ENCODE measurements at regions of chr7 and their contacts with region 1.

Region 1: DNA sequence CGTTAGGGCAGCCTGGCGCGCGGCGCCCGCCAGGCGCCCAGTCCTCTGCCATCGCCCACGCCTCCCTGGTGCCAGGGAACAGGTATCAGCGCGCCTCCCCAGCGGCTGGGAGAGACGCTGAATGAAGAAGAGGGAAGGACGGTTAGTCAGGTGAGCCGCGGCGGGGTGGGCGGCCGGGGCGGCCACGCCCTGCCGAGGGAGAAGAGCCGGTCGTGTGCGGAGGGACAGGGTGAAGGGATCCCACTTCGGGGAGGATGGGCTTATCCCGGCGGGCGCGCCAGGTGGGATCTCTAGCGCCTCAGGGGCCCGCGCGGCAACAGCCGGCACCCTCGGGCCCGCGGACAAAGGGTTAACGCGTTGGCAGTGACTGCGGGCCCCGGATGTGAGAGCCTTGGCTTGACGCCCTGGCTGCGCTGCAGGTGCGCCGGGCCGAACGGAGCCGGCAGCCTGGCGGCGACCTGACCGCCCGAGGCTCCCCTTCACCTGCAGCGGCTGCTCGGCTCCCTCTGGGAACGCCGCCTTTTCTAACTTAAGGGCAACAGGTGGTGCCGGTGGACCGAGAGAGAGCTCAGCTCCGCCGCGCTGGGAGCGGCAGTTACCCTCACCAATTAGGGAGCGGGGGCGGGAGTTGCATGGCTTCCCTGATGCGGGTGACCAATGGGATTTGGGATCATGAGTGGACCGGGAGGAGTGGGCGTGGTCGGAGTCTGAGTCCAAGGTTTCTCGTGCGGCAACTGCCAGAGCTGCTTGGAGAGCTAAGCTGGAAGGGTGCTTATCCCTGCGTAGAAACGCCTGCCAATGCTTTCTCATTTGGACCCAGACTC is at the start of gene ARL4A:
- DNase-seq: peak; percentile 98
- H3K4me3 ChIP-seq: peak within 1 kb of the TSS; percentile 82 to 95 (median 89)
- H3K27ac ChIP-seq: peak within 1 kb of the TSS; percentile 84
- H3K4me1 ChIP-seq: peaks cover 6% of the 10 kb centered on the region
- H3K27me3 ChIP-seq: no peaks in the 10 kb centered on the region
- CTCF ChIP-seq: peak; percentile 19 to 63
- total RNA-seq, gene ARL4A: 24.9 to 57.3 TPM

Region 2: GRCh38 chr7:12638851-12639467 is 48.1 kb before region 1 on chr7:
- CTCF ChIA-PET with region 1: no interaction called
- dilution Hi-C with region 1: no loop called
- in situ Hi-C with region 1: no loop called
- intact Hi-C with region 1: loop called (anchors 1 kb)
- DNase-seq: peak; percentile 32
- H3K4me3 ChIP-seq: no peak overlapping the region
- H3K27ac ChIP-seq: no peak overlapping the region
- H3K4me1 ChIP-seq: no peaks in the 10 kb centered on the region
- H3K27me3 ChIP-seq: no peaks in the 10 kb centered on the region
- CTCF ChIP-seq: peak; percentile 56 to 61

Region 3: DNA sequence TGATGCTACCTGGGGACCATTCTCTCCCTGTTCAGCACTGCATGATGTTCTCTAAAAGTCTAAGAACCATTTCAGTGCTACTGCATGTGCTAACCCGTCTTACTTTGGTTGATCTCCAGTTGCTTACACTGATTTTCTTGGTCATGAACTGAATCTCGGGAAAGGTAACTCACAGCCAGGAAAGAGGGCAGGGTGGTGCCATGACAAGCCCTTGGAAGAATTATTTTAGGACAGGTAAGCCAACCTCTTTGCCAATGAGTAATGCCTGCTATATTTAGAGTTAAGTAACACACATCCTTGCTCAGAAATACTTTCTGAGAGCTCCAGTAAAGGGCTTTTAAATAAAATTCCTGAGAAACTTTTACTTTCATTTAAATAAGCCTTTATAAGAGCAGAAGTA is 127.0 kb after region 1 on chr7:
- CTCF ChIA-PET with region 1: no interaction called
- dilution Hi-C with region 1: no loop called
- in situ Hi-C with region 1: no loop called
- intact Hi-C with region 1: loop called (anchors 2 kb)
- DNase-seq: peak; percentile 87
- H3K4me3 ChIP-seq: peak overlapping the region in 1 of 3 experiments; percentile 3
- H3K27ac ChIP-seq: peak overlapping the region; percentile 59
- H3K4me1 ChIP-seq: peaks cover 27% of the 10 kb centered on the region
- H3K27me3 ChIP-seq: no peaks in the 10 kb centered on the region
- CTCF ChIP-seq: no peak

Region 4: DNA sequence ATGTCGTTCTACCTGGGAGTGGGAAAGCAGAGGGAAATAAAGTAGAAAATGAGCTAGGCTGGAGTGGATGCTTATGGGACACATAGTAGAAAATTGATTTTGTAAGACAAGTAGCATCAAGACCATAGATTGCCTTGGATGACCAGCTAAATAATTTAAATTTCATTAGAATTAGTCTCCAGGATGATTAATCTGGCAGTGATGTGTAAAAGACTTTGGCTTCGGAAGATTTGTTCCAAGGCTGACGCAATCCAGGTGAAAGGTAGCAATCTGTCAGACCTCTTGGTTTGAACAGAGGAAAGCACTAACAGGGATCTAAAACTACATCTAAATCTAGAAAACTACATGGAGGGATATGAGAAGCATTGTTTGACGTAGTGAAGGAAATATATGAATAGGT is 236.9 kb after region 1 on chr7:
- CTCF ChIA-PET with region 1: no interaction called
- dilution Hi-C with region 1: no loop called
- in situ Hi-C with region 1: loop called in 1 of 2 experiments (anchors 10 kb)
- intact Hi-C with region 1: loop called (anchors 2 kb)
- DNase-seq: peak; percentile 81
- H3K4me3 ChIP-seq: no peak overlapping the region
- H3K27ac ChIP-seq: peak overlapping the region; percentile 65
- H3K4me1 ChIP-seq: peaks cover 19% of the 10 kb centered on the region
- H3K27me3 ChIP-seq: no peaks in the 10 kb centered on the region
- CTCF ChIP-seq: no peak

Region 5: DNA sequence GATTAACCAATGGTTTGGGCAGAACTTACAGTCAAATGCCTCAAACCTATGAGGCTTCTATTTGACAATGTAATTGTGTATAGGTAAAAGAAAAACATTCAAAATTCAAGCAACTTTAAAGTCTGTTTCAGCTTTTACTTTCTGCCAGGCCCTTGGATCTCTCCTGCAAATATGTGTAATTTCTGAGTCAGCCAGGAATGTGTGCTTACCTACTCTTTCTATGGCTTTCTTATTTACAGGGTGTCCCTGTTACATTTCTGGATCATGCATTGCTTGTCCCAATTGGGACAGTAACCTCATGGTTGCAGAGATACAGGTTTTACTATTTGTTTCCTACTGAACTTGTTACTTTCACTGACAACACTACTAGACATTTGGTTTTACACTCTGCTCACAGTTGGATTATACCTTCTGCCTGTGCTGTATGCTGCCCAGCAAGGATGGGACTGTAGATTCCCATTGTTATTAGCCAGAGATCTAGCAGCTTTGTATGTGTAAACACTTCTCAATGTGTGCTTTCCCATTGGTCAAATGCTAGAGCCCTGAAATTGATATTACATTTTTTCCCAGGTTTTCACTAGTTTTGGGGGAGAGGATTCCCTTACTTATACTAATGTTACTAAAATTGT is 355.6 kb after region 1 on chr7:
- CTCF ChIA-PET with region 1: no interaction called
- dilution Hi-C with region 1: no loop called
- in situ Hi-C with region 1: no loop called
- intact Hi-C with region 1: loop called (anchors 2 kb)
- DNase-seq: peak; percentile 52
- H3K4me3 ChIP-seq: no peak overlapping the region
- H3K27ac ChIP-seq: no peak overlapping the region
- H3K4me1 ChIP-seq: peaks cover 13% of the 10 kb centered on the region
- H3K27me3 ChIP-seq: no peaks in the 10 kb centered on the region
- CTCF ChIP-seq: no peak

Region 6: GRCh38 chr7:13132314-13132713 is 445.2 kb after region 1 on chr7:
- CTCF ChIA-PET with region 1: no interaction called
- dilution Hi-C with region 1: no loop called
- in situ Hi-C with region 1: no loop called
- intact Hi-C with region 1: loop called (anchors 5 kb)
- DNase-seq: no peak
- H3K4me3 ChIP-seq: no peak overlapping the region
- H3K27ac ChIP-seq: no peak overlapping the region
- H3K4me1 ChIP-seq: no peaks in the 10 kb centered on the region
- H3K27me3 ChIP-seq: no peaks in the 10 kb centered on the region
- CTCF ChIP-seq: no peak

Region 7: GRCh38 chr7:13262929-13263530 is 575.9 kb after region 1 on chr7:
- CTCF ChIA-PET with region 1: no interaction called
- dilution Hi-C with region 1: no loop called
- in situ Hi-C with region 1: loop called in 1 of 2 experiments (anchors 25 kb)
- intact Hi-C with region 1: loop called (anchors 1 kb)
- DNase-seq: peak; percentile 10
- H3K4me3 ChIP-seq: no peak overlapping the region
- H3K27ac ChIP-seq: no peak overlapping the region
- H3K4me1 ChIP-seq: no peaks in the 10 kb centered on the region
- H3K27me3 ChIP-seq: no peaks in the 10 kb centered on the region
- CTCF ChIP-seq: peak; percentile 39 to 61